K562 (cell line): ENCODE measurements at regions of chr9 and their contacts with region 1.

Region 1: GRCh38 chr9:92058723-92059444 is 56.3 kb downstream of the SPTLC1 start:
- DNase-seq: no peak
- ATAC-seq: no peak
- H3K4me3 ChIP-seq: no peak overlapping the region
- H3K27ac ChIP-seq: no peak overlapping the region
- H3K4me1 ChIP-seq: no peaks in the 10 kb centered on the region
- H3K27me3 ChIP-seq: no peaks in the 10 kb centered on the region
- CTCF ChIP-seq: no peak
- EP300 ChIP-seq: no peak
- POLR2A ChIP-seq: no peak
- RAD21 ChIP-seq: no peak

Region 2: GRCh38 chr9:90767523-90768100 is 1291.3 kb before region 1 on chr9:
- CTCF ChIA-PET with region 1: no interaction called
- POLR2A ChIA-PET with region 1: no interaction called
- in situ Hi-C with region 1: loop called (anchors 10 kb)
- intact Hi-C with region 1: no loop called
- DNase-seq: no peak
- ATAC-seq: no peak
- H3K4me3 ChIP-seq: no peak overlapping the region
- H3K27ac ChIP-seq: no peak overlapping the region
- H3K4me1 ChIP-seq: no peaks in the 10 kb centered on the region
- H3K27me3 ChIP-seq: no peaks in the 10 kb centered on the region
- CTCF ChIP-seq: no peak
- EP300 ChIP-seq: no peak
- POLR2A ChIP-seq: no peak
- RAD21 ChIP-seq: no peak